ENCODE measurements at regions of chr21 and their contacts with region 1.

Region 1: DNA sequence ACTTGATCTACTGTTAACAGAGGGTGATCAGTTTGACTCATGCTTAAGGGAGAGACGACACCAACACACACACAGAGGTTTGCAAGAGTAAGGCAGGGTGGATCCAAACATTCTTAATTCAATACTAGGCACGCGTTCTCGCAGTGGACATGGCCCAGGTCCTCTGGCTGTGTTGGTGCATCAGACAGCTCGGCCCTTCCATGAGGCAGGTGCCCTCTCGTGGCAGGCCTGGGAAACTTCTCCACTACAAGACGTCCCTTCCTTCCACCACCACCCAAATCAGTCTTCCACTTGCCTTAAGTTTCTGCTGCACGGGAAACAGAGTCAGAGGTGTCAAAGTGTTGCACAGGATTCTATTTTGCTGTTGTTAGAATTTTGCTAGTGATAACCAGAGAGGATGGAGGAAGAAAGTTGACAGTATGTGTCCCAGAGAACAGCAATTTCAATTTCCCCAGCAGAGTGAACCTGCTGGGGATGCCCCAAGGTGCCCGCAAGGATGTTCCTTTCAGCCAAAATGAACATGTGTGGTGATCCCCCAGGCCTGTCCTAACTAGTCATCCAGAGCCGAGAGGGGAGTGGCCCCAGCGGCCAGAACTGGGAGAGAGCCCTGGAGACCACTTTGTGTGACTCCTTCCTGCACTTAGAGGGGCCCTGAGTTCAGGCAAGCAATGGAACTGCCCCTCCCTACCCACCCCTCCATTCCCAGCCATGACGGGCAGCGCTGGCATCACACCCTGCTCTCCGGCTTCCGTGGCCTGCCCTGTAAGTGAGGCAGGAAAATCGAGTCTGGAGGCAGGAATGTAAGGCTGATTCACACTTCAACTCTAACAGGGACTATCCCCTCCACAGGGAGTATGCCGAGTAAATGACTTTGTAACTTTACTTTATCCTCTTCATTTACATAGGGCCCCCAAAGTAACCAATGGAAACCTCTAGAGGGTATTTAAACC is 34.8 kb downstream of the MX1 start:
- DNase-seq: peak; percentile 22 to 67 (median 26)
- H3K4me3 ChIP-seq: no peak overlapping the region
- H3K4me3 Mint-ChIP-seq: no peak overlapping the region
- H3K27ac ChIP-seq: no peak overlapping the region
- H3K27ac Mint-ChIP-seq: peak overlapping the region in 4 of 8 donors; percentile 5 to 60 (median 55)
- H3K4me1 ChIP-seq: no peaks in the 10 kb centered on the region
- H3K4me1 Mint-ChIP-seq: peaks cover 0 to 7% (median 0%) of the 10 kb centered on the region in 3 donors
- H3K27me3 ChIP-seq: no peaks in the 10 kb centered on the region
- H3K27me3 Mint-ChIP-seq: peaks cover 0 to 2% of the 10 kb centered on the region in 2 donors

Region 2: DNA sequence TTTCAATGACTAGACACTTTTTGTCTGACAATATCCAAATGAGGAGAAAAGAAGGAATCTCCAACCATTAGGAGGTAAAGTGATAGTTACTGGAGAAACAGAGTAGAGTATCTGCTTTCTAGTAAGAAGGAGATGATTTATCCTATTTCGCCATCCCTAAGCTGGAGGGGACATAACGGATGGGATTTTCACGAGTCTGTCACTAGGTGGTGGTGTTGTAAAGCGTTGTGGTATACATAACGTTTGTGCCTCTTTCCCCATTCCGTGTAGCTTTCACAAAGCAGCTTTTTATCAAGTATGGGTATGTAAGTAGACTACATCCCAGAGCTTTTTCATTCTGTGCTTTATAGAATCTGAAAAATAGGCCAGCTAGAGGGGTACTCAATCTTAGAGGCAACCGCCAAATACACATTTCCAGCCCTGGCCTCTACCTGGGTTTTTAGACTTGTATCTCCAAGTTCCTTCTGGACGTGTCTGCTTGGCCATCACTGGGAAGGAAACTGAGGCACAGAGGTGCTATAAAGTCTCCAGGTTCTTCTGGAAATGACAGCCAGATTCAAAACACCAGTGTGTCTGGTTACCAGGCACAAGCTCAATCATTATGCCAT is 177.5 kb before region 1 on chr21:
- CTCF ChIA-PET with region 1: interaction called, 92 read pairs
- POLR2A ChIA-PET with region 1: no interaction called
- DNase-seq: peak in 4 of 5 donors; percentile 15 to 64 (median 56)
- H3K4me3 ChIP-seq: no peak overlapping the region
- H3K4me3 Mint-ChIP-seq: no peak overlapping the region
- H3K27ac ChIP-seq: no peak overlapping the region
- H3K27ac Mint-ChIP-seq: no peak overlapping the region
- H3K4me1 ChIP-seq: no peaks in the 10 kb centered on the region
- H3K4me1 Mint-ChIP-seq: no peaks in the 10 kb centered on the region
- H3K27me3 ChIP-seq: no peaks in the 10 kb centered on the region
- H3K27me3 Mint-ChIP-seq: peaks cover 6 to 32% of the 10 kb centered on the region in 2 donors